ENCODE measurements at regions of chr6 and their contacts with region 1.

Region 1: GRCh38 chr6:35710241-35710847 is 21.6 kb upstream of the FKBP5 start:
- DNase-seq: peak; percentile 76
- H3K4me3 Mint-ChIP-seq: no peak overlapping the region
- H3K27ac Mint-ChIP-seq: peak overlapping the region; percentile 87
- H3K4me1 Mint-ChIP-seq: peaks cover 23% of the 10 kb centered on the region
- H3K27me3 Mint-ChIP-seq: no peaks in the 10 kb centered on the region

Region 2: GRCh38 chr6:35725721-35726438 is 15.5 kb after region 1 on chr6:
- CTCF ChIA-PET with region 1: interaction called, 6 read pairs
- POLR2A ChIA-PET with region 1: interaction called, 11 read pairs
- intact Hi-C with region 1: loop called (anchors 1 kb)
- DNase-seq: peak; percentile 48
- H3K4me3 Mint-ChIP-seq: peak overlapping the region; percentile 66
- H3K27ac Mint-ChIP-seq: peak overlapping the region; percentile 87
- H3K4me1 Mint-ChIP-seq: peaks cover 78% of the 10 kb centered on the region
- H3K27me3 Mint-ChIP-seq: no peaks in the 10 kb centered on the region

Region 3: GRCh38 chr6:35771343-35771627 is 60.9 kb after region 1 on chr6:
- CTCF ChIA-PET with region 1: no interaction called
- POLR2A ChIA-PET with region 1: no interaction called
- intact Hi-C with region 1: no loop called
- DNase-seq: no peak
- H3K4me3 Mint-ChIP-seq: no peak overlapping the region
- H3K27ac Mint-ChIP-seq: no peak overlapping the region
- H3K4me1 Mint-ChIP-seq: no peaks in the 10 kb centered on the region
- H3K27me3 Mint-ChIP-seq: peaks cover 15% of the 10 kb centered on the region